Right lobe of liver (tissue), 6 donors: ENCODE measurements at regions of chr15 and their contacts with region 1.

Region 1: GRCh38 chr15:94119923-94120775 is 111.2 kb upstream of the MCTP2 start:
- DNase-seq: peak in 1 of 3 donors; percentile 58
- ATAC-seq: peak; percentile 89 to 99 (median 96)
- H3K4me3 ChIP-seq: no peak overlapping the region
- H3K27ac ChIP-seq: no peak overlapping the region
- H3K4me1 ChIP-seq: no peaks in the 10 kb centered on the region
- H3K27me3 ChIP-seq: peaks cover 0 to 3% of the 10 kb centered on the region in 2 donors
- CTCF ChIP-seq: peak; percentile 67 to 86 (median 79)
- POLR2A ChIP-seq: no peak

Region 2: DNA sequence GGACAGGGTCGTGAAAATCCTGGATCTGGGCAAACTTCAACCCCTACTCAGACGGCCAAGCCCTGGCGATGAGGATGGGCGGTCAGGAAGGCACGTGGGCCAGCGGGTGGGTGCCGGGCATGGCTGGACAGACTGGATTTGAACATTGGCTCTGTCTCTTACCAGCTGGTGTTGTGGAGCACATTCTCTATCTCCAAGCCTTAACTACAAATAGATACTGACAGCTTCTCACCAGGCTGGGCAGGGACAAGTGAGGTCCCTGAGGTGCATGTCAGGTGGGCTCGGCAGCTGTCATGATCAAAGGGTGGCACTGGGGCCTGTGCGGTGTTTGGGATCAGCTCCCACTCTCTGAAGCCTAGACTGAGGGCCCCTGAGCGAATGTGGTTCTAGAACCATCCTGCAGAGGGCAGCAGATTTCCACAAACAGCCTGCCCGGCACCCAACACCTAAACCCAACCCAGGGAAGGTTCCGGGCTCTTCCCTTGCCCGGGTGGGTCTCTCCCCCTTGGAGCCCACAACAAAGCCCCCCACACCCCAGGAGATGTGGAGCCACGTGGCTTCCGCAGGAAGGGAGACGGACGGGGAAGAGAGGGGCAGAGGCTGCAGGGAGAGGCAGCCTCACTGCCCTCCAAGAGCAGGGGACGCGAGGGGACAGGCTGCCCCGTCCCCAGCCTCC is 1089.6 kb before region 1 on chr15:
- intact Hi-C with region 1: loop called (anchors 5 to 10 kb)
- DNase-seq: peak; percentile 61 to 77 (median 75)
- ATAC-seq: peak; percentile 52 to 67 (median 64)
- H3K4me3 ChIP-seq: no peak overlapping the region
- H3K27ac ChIP-seq: peak overlapping the region in 1 of 3 donors; percentile 83
- H3K4me1 ChIP-seq: peaks cover 0 to 46% (median 19%) of the 10 kb centered on the region in 4 donors
- H3K27me3 ChIP-seq: no peaks in the 10 kb centered on the region
- CTCF ChIP-seq: peak; percentile 73 to 87 (median 80)
- POLR2A ChIP-seq: no peak

Region 3: GRCh38 chr15:93035953-93036800 is 1084.0 kb before region 1 on chr15:
- intact Hi-C with region 1: loop called (anchors 5 to 10 kb)
- DNase-seq: peak in 2 of 3 donors; percentile 33 to 52
- ATAC-seq: peak; percentile 59 to 76 (median 68)
- H3K4me3 ChIP-seq: no peak overlapping the region
- H3K27ac ChIP-seq: no peak overlapping the region
- H3K4me1 ChIP-seq: no peaks in the 10 kb centered on the region
- H3K27me3 ChIP-seq: no peaks in the 10 kb centered on the region
- CTCF ChIP-seq: peak; percentile 50 to 70 (median 64)
- POLR2A ChIP-seq: no peak

Region 4: GRCh38 chr15:93649691-93650235 is 470.4 kb before region 1 on chr15:
- intact Hi-C with region 1: no loop called
- DNase-seq: no peak
- ATAC-seq: no peak
- H3K4me3 ChIP-seq: no peak overlapping the region
- H3K27ac ChIP-seq: no peak overlapping the region
- H3K4me1 ChIP-seq: no peaks in the 10 kb centered on the region
- H3K27me3 ChIP-seq: no peaks in the 10 kb centered on the region
- CTCF ChIP-seq: no peak
- POLR2A ChIP-seq: no peak

Region 5: GRCh38 chr15:93997084-93997918 is 122.8 kb before region 1 on chr15:
- intact Hi-C with region 1: no loop called
- DNase-seq: no peak
- ATAC-seq: peak in 3 of 4 donors; percentile 42 to 51 (median 47)
- H3K4me3 ChIP-seq: no peak overlapping the region
- H3K27ac ChIP-seq: no peak overlapping the region
- H3K4me1 ChIP-seq: no peaks in the 10 kb centered on the region
- H3K27me3 ChIP-seq: no peaks in the 10 kb centered on the region
- CTCF ChIP-seq: peak; percentile 44 to 72 (median 65)
- POLR2A ChIP-seq: no peak